HepG2 (cell line): ENCODE measurements at regions of chr5 and their contacts with region 1.

Region 1: DNA sequence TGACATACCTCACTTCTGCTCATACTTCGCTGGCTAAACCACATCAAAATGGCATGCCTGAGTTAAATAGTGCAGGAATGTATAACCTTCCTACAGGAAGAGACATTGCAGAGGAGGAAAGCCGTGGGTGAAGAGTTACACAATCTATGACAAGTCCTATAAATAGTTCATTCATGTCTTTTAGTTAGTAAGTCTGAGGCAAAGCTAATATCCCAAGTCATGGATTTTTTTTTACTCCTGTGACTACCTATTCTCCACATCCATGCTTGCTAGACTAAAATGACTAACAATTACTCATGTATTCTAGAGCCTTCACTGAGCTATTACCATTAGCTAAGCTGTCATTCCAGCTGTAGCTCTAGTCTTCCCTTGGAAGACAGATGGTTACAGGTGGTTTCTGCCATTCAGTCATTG is 391.3 kb downstream of the NR2F1-AS1 start:
- DNase-seq: peak; percentile 76
- ATAC-seq: peak; percentile 62; the same call in 2 of the 3 replicates
- H3K4me3 ChIP-seq: no peak overlapping the region
- H3K27ac ChIP-seq: no peak overlapping the region
- H3K4me1 ChIP-seq: peaks cover 48% of the 10 kb centered on the region
- H3K27me3 ChIP-seq: no peaks in the 10 kb centered on the region
- CTCF ChIP-seq: no peak
- EP300 ChIP-seq: peak in 1 of 2 experiments; percentile 46; a peak in 1 of 4 replicates
- POLR2A ChIP-seq: no peak
- RAD21 ChIP-seq: no peak

Region 2: GRCh38 chr5:93130624-93131490 is 58.9 kb before region 1 on chr5:
- CTCF ChIA-PET with region 1: no interaction called
- POLR2A ChIA-PET with region 1: no interaction called
- in situ Hi-C with region 1: no loop called
- intact Hi-C with region 1: loop called (anchors 1 kb)
- DNase-seq: no peak
- ATAC-seq: no peak
- H3K4me3 ChIP-seq: no peak overlapping the region
- H3K27ac ChIP-seq: no peak overlapping the region
- H3K4me1 ChIP-seq: no peaks in the 10 kb centered on the region
- H3K27me3 ChIP-seq: peaks cover 0 to 6% of the 10 kb centered on the region in 2 experiments; a peak in 1 of 5 replicates
- CTCF ChIP-seq: no peak
- EP300 ChIP-seq: no peak
- POLR2A ChIP-seq: no peak
- RAD21 ChIP-seq: no peak

Region 3: DNA sequence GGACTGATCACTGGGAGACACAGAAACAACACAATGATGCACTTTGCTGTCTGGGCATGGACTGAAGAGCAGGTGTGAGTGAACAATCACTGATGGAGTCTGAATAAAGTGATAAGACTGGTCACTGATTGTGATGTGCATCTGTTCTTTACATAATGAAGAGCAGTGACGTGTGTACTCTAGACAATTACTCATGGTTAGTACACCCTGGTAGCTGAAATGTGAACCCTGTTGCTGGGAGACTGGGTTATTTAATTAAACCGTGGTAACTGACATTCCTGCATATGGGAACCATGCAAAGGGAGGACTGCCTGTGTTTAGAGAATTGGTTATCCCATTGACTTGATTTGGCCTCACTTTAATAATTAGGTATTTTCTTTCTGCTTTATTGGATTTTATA is 188.4 kb after region 1 on chr5:
- CTCF ChIA-PET with region 1: no interaction called
- POLR2A ChIA-PET with region 1: no interaction called
- in situ Hi-C with region 1: no loop called
- intact Hi-C with region 1: no loop called
- DNase-seq: no peak
- ATAC-seq: no peak
- H3K4me3 ChIP-seq: no peak overlapping the region
- H3K27ac ChIP-seq: no peak overlapping the region
- H3K4me1 ChIP-seq: no peaks in the 10 kb centered on the region
- H3K27me3 ChIP-seq: peaks cover 0 to 3% of the 10 kb centered on the region in 2 experiments; a peak in 1 of 5 replicates
- CTCF ChIP-seq: no peak
- EP300 ChIP-seq: no peak
- POLR2A ChIP-seq: no peak
- RAD21 ChIP-seq: no peak